Panc1 (cell line): ENCODE measurements at regions of chr7 and their contacts with region 1.

Region 1: GRCh38 chr7:18552943-18553584 is 57.5 kb downstream of the HDAC9 start:
- DNase-seq: no peak
- ATAC-seq: peak; percentile 95
- H3K4me3 ChIP-seq: peak overlapping the region; percentile 1 to 33; a peak in 3 of 4 replicates
- H3K27ac ChIP-seq: peak overlapping the region; percentile 71
- H3K4me1 ChIP-seq: peaks cover 31% of the 10 kb centered on the region
- H3K27me3 ChIP-seq: no peaks in the 10 kb centered on the region
- CTCF ChIP-seq: no peak

Region 2: DNA sequence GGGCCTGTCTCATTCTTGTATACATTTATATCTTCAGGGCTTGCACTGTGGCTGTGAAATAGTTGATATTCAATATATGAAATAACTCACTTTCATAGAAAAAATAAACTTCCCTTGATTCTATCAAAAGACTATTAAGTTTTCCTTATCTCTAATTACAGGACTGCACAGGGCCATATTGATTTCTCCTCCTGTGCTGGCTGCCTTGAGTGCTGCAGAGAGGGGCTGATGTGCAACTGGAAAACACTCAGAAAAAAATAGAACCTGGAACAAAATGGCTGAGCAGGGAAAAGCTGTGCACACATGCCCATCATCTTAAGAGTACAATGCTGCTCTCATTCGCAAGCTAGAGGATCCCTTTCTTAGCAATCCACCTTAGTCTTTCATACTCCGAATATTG is 63.4 kb before region 1 on chr7:
- CTCF ChIA-PET with region 1: no interaction called
- POLR2A ChIA-PET with region 1: no interaction called
- in situ Hi-C with region 1: no loop called
- intact Hi-C with region 1: no loop called
- DNase-seq: no peak
- ATAC-seq: no peak
- H3K4me3 ChIP-seq: no peak overlapping the region
- H3K27ac ChIP-seq: no peak overlapping the region
- H3K4me1 ChIP-seq: no peaks in the 10 kb centered on the region
- H3K27me3 ChIP-seq: no peaks in the 10 kb centered on the region
- CTCF ChIP-seq: no peak

Region 3: GRCh38 chr7:18513343-18513742 is 39.7 kb before region 1 on chr7:
- CTCF ChIA-PET with region 1: no interaction called
- POLR2A ChIA-PET with region 1: no interaction called
- in situ Hi-C with region 1: no loop called
- intact Hi-C with region 1: loop called (anchors 5 kb)
- DNase-seq: no peak
- ATAC-seq: no peak
- H3K4me3 ChIP-seq: no peak overlapping the region
- H3K27ac ChIP-seq: peak overlapping the region; percentile 62
- H3K4me1 ChIP-seq: peaks cover 43% of the 10 kb centered on the region
- H3K27me3 ChIP-seq: no peaks in the 10 kb centered on the region
- CTCF ChIP-seq: no peak